Head of caudate nucleus (tissue), 42 donors: ENCODE measurements at regions of chrX and their contacts with region 1.

Region 1: DNA sequence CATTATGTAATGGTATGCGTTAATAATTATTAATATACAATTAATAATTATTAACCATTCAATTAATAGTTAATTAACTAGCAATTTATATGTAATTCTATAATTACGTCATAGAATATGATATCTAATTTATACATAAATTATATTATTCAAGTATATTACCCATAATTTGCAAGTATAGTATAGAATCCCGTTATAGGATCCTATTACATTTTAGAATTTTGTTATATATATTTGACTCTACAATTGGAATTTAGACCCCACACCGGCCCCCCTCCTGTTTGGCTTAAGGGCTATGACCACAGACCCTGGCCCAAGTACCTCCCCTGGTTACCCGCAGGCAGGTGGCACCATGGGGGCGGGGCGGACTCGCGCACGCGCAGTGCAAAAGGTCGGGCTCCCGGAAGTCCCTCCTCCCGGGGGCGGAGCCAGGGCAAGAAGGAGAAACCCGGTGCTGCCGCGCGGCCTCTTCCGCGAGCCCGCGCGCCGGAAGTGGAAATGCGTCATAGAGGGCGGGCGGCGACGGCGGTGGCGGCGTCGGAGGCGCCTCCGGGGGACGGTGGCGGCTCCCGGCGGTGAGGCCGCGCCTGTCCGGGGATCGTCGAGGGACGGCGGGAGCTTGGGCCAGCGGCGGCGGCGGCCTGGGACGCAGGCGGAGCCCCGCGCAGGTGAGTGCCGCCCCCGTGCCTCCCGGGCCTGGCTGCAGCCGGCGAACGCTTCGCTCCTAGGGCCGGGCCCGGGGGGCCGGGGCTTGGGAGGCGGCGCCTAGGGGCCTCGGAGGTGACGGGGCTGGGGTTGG is at the start of gene AKAP17A:
- DNase-seq: peak; percentile 90 to 99 (median 98)

Region 2: GRCh38 chrX:1391707-1392375 is 199.5 kb before region 1 on chrX and contains the start of gene SLC25A6:
- intact Hi-C with region 1: loop called (anchors 5 kb)
- DNase-seq: peak; percentile 97 to 100 (median 99)

Region 3: GRCh38 chrX:1403241-1403640 is 188.1 kb before region 1 on chrX:
- intact Hi-C with region 1: no loop called
- DNase-seq: peak in 4 of 42 donors; percentile 15 to 44 (median 34)

Region 4: DNA sequence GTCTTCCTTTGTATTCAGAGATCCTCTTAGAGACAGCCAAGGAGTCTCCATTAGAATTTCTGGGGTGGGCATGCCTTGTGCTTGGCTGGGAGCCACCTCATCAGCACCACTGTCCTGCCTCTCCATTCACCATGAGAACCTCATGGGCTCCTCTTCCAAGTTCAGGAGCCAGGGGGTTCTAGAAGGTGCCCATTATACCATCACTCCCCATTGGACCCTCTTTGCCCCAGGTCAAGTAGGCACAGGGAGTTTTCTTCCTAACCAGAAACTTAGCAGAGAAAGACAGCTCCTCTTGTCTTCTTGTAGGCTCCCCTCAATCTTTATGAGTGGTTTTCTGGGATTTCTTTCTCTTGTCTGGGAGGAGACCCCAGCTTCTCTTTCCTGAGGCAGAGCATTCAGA is 54.7 kb after region 1 on chrX:
- intact Hi-C with region 1: no loop called
- DNase-seq: no peak